ENCODE measurements at regions of chr1 and their contacts with region 1.

Region 1: DNA sequence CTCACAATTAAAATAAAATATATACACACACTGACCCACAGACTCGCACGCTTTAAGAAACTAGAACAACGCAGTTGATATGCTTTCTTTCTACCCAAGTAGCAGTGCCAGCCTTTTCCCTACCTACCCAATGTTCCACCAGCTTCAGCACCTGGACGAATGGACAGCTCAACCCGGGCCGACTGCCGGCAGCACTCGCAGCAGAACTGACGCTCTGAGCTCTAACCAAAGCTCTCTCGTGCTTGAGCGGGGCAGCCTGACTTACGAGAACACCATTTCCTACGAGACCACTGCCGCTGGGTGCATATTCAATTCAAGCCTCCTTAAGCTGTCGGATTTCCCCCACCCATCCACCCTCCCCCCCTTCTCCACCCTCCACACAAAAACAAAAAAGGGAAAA is 127.4 kb upstream of the DPYD start:
- DNase-seq: peak; percentile 58
- H3K4me3 Mint-ChIP-seq: no peak overlapping the region
- H3K27ac Mint-ChIP-seq: no peak overlapping the region
- H3K4me1 Mint-ChIP-seq: peaks cover 44% of the 10 kb centered on the region
- H3K27me3 Mint-ChIP-seq: peaks cover 89% of the 10 kb centered on the region

Region 2: DNA sequence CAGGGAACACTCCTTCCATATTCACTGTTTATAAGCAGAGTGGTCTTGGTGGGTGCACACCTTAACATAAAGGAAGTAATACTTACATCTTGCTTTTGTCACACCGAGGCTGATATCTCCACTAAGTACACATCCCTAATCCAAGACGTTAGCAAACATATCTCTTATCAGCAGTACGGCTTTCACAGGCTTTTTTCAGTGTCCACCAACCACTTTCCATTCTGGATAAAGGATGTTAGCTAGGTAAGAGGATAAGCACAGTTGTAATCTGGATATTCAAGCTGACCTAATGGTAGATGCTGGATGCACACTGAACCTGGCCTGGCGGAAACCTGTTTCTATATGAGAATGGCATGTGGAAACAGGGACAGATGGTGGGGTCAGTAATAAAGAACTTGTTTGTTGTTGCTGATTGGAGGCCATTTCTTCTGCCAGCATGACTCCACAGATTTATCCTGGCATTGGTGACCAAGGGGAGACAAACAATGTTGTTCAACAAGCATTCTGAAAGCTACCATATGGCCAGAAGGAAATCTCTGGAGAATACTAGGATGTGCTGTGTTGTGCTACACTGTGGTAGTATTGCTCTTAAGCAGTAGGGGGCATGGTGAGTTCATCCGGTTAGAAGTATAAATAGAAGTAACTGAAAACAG is 910.3 kb before region 1 on chr1:
- intact Hi-C with region 1: loop called (anchors 1 kb)
- DNase-seq: no peak
- H3K4me3 Mint-ChIP-seq: no peak overlapping the region
- H3K27ac Mint-ChIP-seq: no peak overlapping the region
- H3K4me1 Mint-ChIP-seq: no peaks in the 10 kb centered on the region
- H3K27me3 Mint-ChIP-seq: no peaks in the 10 kb centered on the region

Region 3: DNA sequence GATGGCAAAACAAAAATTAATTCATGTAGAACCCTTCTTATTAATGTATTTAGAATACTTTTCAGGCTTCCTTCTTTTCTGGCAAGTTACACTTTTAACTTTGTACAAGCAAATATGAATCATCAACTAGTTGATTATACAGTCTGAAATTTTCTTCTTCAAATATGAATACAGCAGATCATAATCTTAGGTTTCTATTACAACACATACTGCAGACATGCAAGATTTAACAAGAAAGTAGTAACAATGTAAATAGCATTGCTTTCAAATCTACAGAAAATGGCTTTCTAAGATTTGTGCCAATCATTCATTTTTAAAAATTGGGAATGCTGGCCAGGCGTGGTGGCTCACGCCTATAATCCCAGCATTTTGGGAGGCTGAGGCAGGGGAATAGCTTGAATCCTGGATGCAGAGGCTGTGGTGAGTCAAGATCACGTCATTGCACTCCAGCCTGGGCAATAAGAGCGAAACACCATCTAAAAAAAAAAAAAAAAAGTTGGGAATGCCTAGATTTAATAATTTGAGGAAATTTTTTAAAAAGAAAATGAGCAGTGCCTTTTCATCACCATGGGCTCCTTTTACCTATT is 59.1 kb before region 1 on chr1:
- intact Hi-C with region 1: loop called (anchors 5 kb)
- DNase-seq: no peak
- H3K4me3 Mint-ChIP-seq: no peak overlapping the region
- H3K27ac Mint-ChIP-seq: no peak overlapping the region
- H3K4me1 Mint-ChIP-seq: peaks cover 20% of the 10 kb centered on the region
- H3K27me3 Mint-ChIP-seq: peaks cover 22% of the 10 kb centered on the region

Measured in activated T-helper 2 cell treated with anti-CD3 and anti-CD28 coated beads, Interferon-gamma antibody, Interleukin-2, Interleukin-4, amounts not matched to agents 10 μg/mL and 5 μg/mL and 100 μg/mL, durations not matched to agents 14 hours and 24 hours and 36 hours (primary cell).